Activated naive CD4-positive, alpha-beta T cell treated with anti-CD3 and anti-CD28 coated beads for 36 hours (primary cell): ENCODE measurements at regions of chr11 and their contacts with region 1.

Region 1: DNA sequence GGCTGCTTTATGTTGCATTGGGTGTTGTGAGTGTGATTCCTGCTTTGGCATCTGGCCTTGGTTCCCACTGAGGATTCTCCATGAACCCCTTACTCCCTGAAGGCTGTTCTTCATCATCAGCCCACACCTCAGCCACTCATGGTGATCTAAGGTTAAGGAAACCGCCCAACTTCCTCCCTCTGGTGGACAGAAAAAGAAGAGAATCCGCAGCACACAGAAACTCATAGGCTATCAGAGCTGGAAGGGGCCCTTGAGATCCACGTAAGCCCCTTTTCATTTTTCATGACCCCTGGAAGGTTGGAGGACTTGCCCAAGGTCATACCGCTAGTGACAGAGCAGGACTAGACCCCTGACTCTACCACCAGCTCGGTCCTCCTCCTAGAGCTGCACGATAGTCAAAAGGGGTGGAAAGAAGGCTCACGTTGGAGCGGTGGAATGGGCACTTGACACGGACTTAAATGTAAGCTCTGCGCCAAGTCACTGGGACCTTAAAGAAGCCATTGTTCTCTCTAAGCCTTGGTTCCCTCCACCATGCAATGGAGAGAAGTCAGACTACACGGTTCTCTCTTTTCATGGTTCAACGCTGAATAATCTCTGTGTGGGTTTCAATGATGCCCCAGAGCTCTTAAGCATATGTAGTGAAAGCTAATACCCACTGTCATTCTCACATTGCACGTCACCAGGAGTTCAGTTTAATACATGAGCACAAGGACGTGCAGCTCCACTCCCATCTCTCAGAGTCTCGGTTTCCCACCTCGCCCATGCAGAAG is 83.6 kb upstream of the CRTAM start:
- DNase-seq: peak; percentile 49
- H3K4me3 Mint-ChIP-seq: no peak overlapping the region
- H3K27ac Mint-ChIP-seq: no peak overlapping the region
- H3K4me1 Mint-ChIP-seq: peaks cover 44% of the 10 kb centered on the region
- H3K27me3 Mint-ChIP-seq: peaks cover 2% of the 10 kb centered on the region

Region 2: GRCh38 chr11:122628810-122629555 is 125.8 kb before region 1 on chr11:
- CTCF ChIA-PET with region 1: interaction called, 49 read pairs
- intact Hi-C with region 1: loop called (anchors 1 kb)
- DNase-seq: peak; percentile 79
- H3K4me3 Mint-ChIP-seq: no peak overlapping the region
- H3K27ac Mint-ChIP-seq: no peak overlapping the region
- H3K4me1 Mint-ChIP-seq: peaks cover 13% of the 10 kb centered on the region
- H3K27me3 Mint-ChIP-seq: no peaks in the 10 kb centered on the region

Region 3: DNA sequence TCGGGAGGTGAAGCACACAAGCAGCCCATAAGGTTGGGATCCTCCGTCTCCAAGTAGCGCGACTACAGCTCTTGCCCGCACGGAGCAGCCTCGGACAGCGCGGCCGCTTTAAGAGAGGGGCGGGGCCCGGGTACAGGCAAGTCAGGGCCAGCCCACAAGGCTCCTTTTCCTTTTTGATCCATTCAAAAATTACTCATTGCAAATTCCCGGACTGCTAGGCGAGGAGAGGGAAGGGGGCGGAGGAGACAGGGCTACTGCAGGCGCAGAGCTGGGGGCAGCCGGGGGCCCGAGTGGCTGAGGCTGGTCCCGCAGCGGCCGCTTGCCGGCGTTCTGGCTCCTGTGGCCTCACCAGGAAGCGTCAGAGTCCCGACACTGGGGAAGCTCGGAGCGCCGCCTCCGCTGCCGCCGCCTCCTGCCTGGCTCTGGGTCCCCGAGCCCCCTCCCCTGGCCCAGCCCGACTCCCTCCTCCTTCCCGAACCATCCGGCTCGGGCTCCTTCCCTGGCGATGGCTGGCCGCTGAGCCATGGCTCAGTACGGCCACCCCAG is 99.1 kb before region 1 on chr11 and contains the start of gene UBASH3B:
- CTCF ChIA-PET with region 1: interaction called, 15 read pairs
- intact Hi-C with region 1: loop called (anchors 1 kb)
- DNase-seq: peak; percentile 64
- H3K4me3 Mint-ChIP-seq: peak within 1 kb of the TSS; percentile 93
- H3K27ac Mint-ChIP-seq: peak within 1 kb of the TSS; percentile 87
- H3K4me1 Mint-ChIP-seq: peaks cover 37% of the 10 kb centered on the region
- H3K27me3 Mint-ChIP-seq: no peaks in the 10 kb centered on the region
- total RNA-seq, gene UBASH3B: 17.9 to 21.1 TPM

Region 4: DNA sequence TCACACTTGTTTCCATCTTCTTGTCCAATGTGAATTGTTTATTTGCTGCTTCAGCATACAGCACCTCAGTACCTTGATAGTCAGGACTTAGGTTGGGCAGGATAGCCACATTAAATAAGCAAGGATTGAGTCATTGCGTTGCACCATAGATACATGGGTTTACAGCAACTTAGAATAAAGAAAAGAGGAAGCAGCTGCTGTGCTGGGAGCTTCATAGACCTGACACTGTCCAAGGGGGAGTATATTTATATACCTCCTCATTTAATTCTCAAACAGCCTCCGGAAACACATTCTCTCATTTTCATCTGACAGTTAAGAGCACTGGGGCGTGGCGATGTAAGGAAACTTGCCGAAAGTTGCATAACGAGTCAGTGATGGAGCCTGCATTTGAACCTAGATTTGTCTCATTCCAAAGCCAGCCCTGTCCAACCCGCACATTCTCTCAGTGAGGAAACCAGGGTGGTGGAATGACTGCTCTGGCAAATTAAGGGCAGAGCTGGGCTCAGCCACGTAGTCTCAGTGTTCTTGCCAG is 57.0 kb before region 1 on chr11:
- CTCF ChIA-PET with region 1: interaction called, 14 read pairs
- intact Hi-C with region 1: no loop called
- DNase-seq: peak; percentile 77
- H3K4me3 Mint-ChIP-seq: peak overlapping the region; percentile 50
- H3K27ac Mint-ChIP-seq: peak overlapping the region; percentile 78
- H3K4me1 Mint-ChIP-seq: peaks cover 77% of the 10 kb centered on the region
- H3K27me3 Mint-ChIP-seq: no peaks in the 10 kb centered on the region

Region 5: GRCh38 chr11:122765487-122766131 is 10.9 kb after region 1 on chr11:
- CTCF ChIA-PET with region 1: interaction called, 20 read pairs
- intact Hi-C with region 1: no loop called
- DNase-seq: no peak
- H3K4me3 Mint-ChIP-seq: no peak overlapping the region
- H3K27ac Mint-ChIP-seq: no peak overlapping the region
- H3K4me1 Mint-ChIP-seq: no peaks in the 10 kb centered on the region
- H3K27me3 Mint-ChIP-seq: no peaks in the 10 kb centered on the region

Region 6: GRCh38 chr11:122781378-122782195 is 26.8 kb after region 1 on chr11:
- CTCF ChIA-PET with region 1: interaction called, 33 read pairs
- intact Hi-C with region 1: loop called (anchors 1 kb)
- DNase-seq: peak; percentile 87
- H3K4me3 Mint-ChIP-seq: no peak overlapping the region
- H3K27ac Mint-ChIP-seq: no peak overlapping the region
- H3K4me1 Mint-ChIP-seq: peaks cover 22% of the 10 kb centered on the region
- H3K27me3 Mint-ChIP-seq: no peaks in the 10 kb centered on the region

Region 7: GRCh38 chr11:122832721-122833470 is 78.2 kb after region 1 on chr11:
- CTCF ChIA-PET with region 1: no interaction called
- intact Hi-C with region 1: no loop called
- DNase-seq: no peak
- H3K4me3 Mint-ChIP-seq: no peak overlapping the region
- H3K27ac Mint-ChIP-seq: no peak overlapping the region
- H3K4me1 Mint-ChIP-seq: peaks cover 9% of the 10 kb centered on the region
- H3K27me3 Mint-ChIP-seq: no peaks in the 10 kb centered on the region